Activated B cell treated with CpG ODN at 0.5 μM for 24 hours (primary cell): ENCODE measurements at regions of chr6 and their contacts with region 1.

Region 1: GRCh38 chr6:33620856-33621710 is at the start of gene ITPR3:
- DNase-seq: peak; percentile 71
- ATAC-seq: peak; percentile 85
- H3K4me3 Mint-ChIP-seq: peak within 1 kb of the TSS; percentile 89
- H3K27ac Mint-ChIP-seq: peak within 1 kb of the TSS; percentile 76
- H3K4me1 Mint-ChIP-seq: peaks cover 47% of the 10 kb centered on the region
- H3K27me3 Mint-ChIP-seq: no peaks in the 10 kb centered on the region
- CTCF ChIP-seq: no peak
- total RNA-seq, gene ITPR3: 31.7 and 35.5 TPM in 2 replicates

Region 2: DNA sequence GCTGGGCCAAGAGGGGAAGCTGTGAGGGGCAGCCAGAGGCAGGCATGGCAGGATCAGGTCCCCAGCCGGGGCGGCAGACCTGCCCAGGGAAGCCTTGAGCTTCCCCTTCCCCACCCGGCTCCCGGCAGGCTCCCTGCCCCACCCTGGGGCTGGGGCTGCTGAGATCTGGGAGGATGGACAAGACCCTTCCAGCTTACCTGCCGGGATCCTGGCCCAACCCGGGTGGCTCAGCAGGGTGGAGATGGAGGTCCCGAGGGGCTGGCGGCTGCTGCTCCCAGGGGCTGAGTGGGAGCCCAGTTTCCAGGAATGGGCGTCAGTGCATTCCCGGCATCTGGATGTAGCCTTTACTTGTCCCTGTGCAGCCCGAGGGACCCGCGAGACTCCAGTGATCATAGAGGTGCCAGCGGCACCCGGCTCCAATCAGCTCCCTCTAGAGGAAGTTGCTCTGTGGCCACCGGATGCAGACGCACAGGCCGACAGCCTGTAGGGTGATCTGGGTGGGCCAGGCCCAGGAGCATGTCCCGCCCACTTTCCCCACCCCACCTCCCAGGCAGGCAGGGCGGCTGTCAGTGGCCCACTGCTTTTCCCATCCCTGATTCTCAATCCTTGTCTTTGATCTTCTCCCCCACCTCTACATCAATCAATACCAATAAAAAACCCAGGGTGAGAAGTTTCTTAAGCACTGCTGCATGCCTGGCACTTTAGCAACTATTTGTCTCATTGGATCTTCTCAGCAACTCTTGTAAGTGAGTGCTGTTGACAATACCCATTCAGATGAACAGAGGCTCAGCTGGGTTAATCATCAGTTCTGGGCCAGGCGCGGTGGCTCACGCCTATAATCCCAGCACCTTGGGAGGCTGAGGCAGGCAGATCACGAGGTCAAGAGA is 41.0 kb before region 1 on chr6 and contains the start of gene BAK1:
- CTCF ChIA-PET with region 1: no interaction called
- POLR2A ChIA-PET with region 1: interaction called, 15 read pairs
- intact Hi-C with region 1: no loop called
- DNase-seq: peak; percentile 72
- ATAC-seq: peak; percentile 97
- H3K4me3 Mint-ChIP-seq: peak within 1 kb of the TSS; percentile 88
- H3K27ac Mint-ChIP-seq: peak within 1 kb of the TSS; percentile 89
- H3K4me1 Mint-ChIP-seq: peaks cover 45% of the 10 kb centered on the region
- H3K27me3 Mint-ChIP-seq: no peaks in the 10 kb centered on the region
- CTCF ChIP-seq: no peak
- total RNA-seq, gene BAK1: 29.5 and 29.6 TPM in 2 replicates

Region 3: GRCh38 chr6:33592411-33593054 is 28.6 kb before region 1 on chr6:
- CTCF ChIA-PET with region 1: interaction called, 9 read pairs
- POLR2A ChIA-PET with region 1: interaction called, 37 read pairs
- intact Hi-C with region 1: loop called (anchors 1 kb)
- DNase-seq: peak; percentile 64
- ATAC-seq: peak; percentile 51
- H3K4me3 Mint-ChIP-seq: peak overlapping the region; percentile 58
- H3K27ac Mint-ChIP-seq: peak overlapping the region; percentile 93
- H3K4me1 Mint-ChIP-seq: peaks cover 68% of the 10 kb centered on the region
- H3K27me3 Mint-ChIP-seq: no peaks in the 10 kb centered on the region
- CTCF ChIP-seq: no peak

Region 4: GRCh38 chr6:33633462-33634158 is 12.5 kb after region 1 on chr6:
- CTCF ChIA-PET with region 1: interaction called, 3 read pairs
- POLR2A ChIA-PET with region 1: interaction called, 23 read pairs
- intact Hi-C with region 1: loop called (anchors 1 kb)
- DNase-seq: peak; percentile 58
- ATAC-seq: peak; percentile 92
- H3K4me3 Mint-ChIP-seq: peak overlapping the region; percentile 81
- H3K27ac Mint-ChIP-seq: peak overlapping the region; percentile 14
- H3K4me1 Mint-ChIP-seq: peaks cover 53% of the 10 kb centered on the region
- H3K27me3 Mint-ChIP-seq: no peaks in the 10 kb centered on the region
- CTCF ChIP-seq: no peak

Region 5: DNA sequence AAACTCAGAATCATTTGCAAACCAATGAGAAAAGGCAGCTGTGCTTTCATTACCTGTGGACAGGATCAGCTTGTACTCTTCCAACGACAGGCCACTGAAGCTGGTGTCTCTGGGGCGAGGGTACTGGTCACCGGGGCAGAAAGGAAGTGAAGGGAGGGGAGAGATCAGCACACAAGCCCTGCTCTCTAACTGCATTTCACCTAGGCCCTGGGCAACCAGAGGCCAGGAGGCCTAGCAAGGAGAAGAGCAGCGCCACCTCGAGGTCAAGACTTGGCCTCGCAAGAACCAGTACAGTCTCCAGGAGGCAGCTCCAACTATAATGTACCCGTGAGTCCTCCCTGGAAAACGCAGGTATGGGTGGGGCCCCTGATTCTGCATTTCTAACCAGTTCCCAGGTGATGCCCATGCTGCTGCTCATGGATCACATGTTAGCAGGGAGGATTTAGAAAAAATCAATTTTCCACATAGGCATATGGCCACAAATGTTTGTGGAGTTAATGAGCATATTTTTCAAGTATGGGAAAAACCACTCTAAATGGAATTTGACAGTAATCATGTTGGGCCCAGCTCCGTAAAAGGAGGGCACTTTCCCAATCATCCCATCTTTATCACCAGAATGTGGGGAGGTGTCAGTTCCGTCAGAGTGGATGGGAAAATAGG is 79.4 kb after region 1 on chr6:
- CTCF ChIA-PET with region 1: interaction called, 4 read pairs
- POLR2A ChIA-PET with region 1: interaction called, 11 read pairs
- intact Hi-C with region 1: loop called (anchors 2 kb)
- DNase-seq: peak; percentile 58
- ATAC-seq: peak; percentile 56
- H3K4me3 Mint-ChIP-seq: peak overlapping the region; percentile 28
- H3K27ac Mint-ChIP-seq: peak overlapping the region; percentile 79
- H3K4me1 Mint-ChIP-seq: peaks cover 69% of the 10 kb centered on the region
- H3K27me3 Mint-ChIP-seq: no peaks in the 10 kb centered on the region
- CTCF ChIP-seq: no peak

Region 6: DNA sequence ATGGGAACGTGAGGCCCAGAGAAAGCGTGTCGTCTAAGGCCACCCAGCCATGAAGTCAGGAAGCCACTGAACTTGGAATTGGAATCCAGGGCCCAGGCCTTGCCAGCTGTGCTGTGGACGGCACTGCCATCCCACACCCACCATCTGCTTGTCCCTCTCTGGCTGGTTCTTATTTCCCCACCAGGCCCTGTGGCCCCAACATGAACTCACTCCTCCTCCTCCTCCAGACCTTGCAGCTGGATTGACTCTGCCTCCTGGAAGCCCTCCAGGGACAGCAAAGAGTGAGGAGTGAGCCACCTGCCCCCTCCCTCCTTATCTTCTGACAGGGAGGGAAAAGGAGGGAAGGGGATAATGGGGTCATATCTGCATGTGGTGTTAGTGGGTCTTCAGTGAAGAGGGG is 141.6 kb after region 1 on chr6:
- CTCF ChIA-PET with region 1: no interaction called
- POLR2A ChIA-PET with region 1: no interaction called
- intact Hi-C with region 1: no loop called
- DNase-seq: no peak
- ATAC-seq: no peak
- H3K4me3 Mint-ChIP-seq: no peak overlapping the region
- H3K27ac Mint-ChIP-seq: no peak overlapping the region
- H3K4me1 Mint-ChIP-seq: no peaks in the 10 kb centered on the region
- H3K27me3 Mint-ChIP-seq: peaks cover 16% of the 10 kb centered on the region
- CTCF ChIP-seq: no peak

Region 7: DNA sequence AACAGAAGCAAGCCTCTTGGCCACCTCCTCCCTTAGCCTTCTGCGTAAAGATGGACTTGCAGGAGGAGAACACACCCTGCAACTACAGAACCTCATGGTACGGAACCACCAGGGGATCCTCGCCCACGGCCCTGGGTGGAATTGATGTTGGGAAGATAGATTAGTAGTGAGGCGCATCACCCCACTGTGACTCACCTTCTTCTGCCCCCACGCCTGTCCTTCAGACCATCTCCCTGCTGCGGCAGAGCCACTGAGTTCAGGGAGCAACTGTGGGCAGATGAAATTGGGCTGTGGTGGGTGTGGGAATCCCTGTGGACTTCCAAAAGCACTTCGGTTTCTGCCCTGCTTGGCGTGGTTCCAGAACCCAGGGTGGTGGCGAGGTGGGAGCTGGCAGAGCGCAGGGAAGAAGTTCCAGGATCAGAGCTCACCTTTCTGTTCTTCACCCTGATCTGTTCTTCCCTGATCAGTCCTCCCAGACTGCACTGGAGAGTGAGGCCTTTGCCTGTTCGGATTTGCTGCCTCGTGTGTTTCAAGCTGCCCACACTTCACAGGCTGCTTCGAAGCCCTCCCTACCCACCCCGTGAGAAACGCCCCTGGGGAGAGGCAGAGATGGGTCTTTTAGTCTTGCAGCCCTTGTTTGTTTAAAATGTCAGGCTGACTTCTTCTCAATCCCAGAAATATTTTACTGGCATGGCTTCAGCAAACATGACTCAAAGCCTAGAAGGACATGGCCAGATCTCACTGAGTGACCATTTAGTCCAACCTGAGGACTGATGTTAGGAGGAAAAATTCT is 275.5 kb after region 1 on chr6:
- CTCF ChIA-PET with region 1: no interaction called
- POLR2A ChIA-PET with region 1: no interaction called
- intact Hi-C with region 1: no loop called
- DNase-seq: no peak
- ATAC-seq: no peak
- H3K4me3 Mint-ChIP-seq: no peak overlapping the region
- H3K27ac Mint-ChIP-seq: no peak overlapping the region
- H3K4me1 Mint-ChIP-seq: peaks cover 3% of the 10 kb centered on the region
- H3K27me3 Mint-ChIP-seq: peaks cover 33% of the 10 kb centered on the region
- CTCF ChIP-seq: no peak